ENCODE measurements at regions of chr16 and their contacts with region 1.

Region 1: DNA sequence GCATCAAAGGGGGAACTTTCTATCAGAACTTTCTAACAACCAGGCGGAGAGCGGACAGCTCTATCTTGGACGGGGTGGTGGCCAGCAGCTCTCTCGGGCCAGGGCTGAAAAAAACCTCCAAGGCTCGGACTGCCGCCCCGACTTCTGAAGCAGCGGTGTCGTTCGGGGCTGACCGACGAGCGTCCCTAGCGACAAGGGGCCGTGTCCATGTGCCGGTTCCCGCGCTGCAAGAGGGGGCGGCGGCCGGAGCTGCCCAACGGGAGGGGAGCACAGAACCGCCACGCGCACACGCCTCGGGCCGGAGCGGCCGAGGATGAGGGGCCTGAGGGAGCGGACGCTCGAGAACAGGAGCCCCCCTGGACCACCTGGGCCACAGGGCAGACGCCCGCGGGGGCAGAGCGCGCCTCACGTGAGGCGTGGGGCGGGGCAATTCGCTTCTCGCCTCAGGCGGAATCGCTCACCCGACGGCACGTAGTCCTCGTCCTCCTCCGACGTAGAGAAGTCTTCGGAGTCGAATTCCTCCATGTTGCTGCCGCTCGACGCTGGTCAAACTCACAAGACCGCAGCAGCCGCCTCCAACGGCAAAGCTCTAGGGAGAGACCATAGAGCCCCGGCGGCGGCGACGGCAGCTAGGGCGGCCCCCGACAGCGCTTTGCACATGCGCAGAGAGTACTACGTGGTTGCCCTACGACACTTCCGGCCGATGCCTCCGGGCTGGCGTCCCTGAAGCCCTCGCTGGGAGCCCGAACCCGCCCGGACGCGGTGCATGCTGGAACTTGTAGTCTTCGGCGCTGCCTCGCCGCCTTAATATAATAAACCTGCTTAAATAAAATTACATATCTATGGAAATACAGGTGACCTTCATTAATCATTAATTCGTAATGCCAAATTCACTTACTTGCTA is at the start of gene CFDP1:
- DNase-seq: peak; percentile 93
- ATAC-seq: peak; percentile 93
- H3K4me3 Mint-ChIP-seq: peak within 1 kb of the TSS; percentile 90
- H3K27ac Mint-ChIP-seq: peak within 1 kb of the TSS; percentile 91
- H3K4me1 Mint-ChIP-seq: peaks cover 24% of the 10 kb centered on the region
- H3K27me3 Mint-ChIP-seq: peaks cover 3% of the 10 kb centered on the region
- total RNA-seq, gene CFDP1: 47.8 to 49.4 TPM

Region 2: GRCh38 chr16:75464130-75464918 is 31.2 kb after region 1 on chr16 and contains the start of gene TMEM170A:
- POLR2A ChIA-PET with region 1: interaction called, 19 read pairs
- DNase-seq: peak; percentile 99
- ATAC-seq: peak; percentile 96
- H3K4me3 Mint-ChIP-seq: peak within 1 kb of the TSS; percentile 92
- H3K27ac Mint-ChIP-seq: peak within 1 kb of the TSS; percentile 91
- H3K4me1 Mint-ChIP-seq: peaks cover 22% of the 10 kb centered on the region
- H3K27me3 Mint-ChIP-seq: no peaks in the 10 kb centered on the region
- total RNA-seq, gene TMEM170A: 37.3 to 38.9 TPM

Region 3: GRCh38 chr16:75506567-75506966 is 73.5 kb after region 1 on chr16:
- POLR2A ChIA-PET with region 1: no interaction called
- DNase-seq: no peak
- ATAC-seq: no peak
- H3K4me3 Mint-ChIP-seq: no peak overlapping the region
- H3K27ac Mint-ChIP-seq: no peak overlapping the region
- H3K4me1 Mint-ChIP-seq: no peaks in the 10 kb centered on the region
- H3K27me3 Mint-ChIP-seq: peaks cover 9% of the 10 kb centered on the region

Region 4: DNA sequence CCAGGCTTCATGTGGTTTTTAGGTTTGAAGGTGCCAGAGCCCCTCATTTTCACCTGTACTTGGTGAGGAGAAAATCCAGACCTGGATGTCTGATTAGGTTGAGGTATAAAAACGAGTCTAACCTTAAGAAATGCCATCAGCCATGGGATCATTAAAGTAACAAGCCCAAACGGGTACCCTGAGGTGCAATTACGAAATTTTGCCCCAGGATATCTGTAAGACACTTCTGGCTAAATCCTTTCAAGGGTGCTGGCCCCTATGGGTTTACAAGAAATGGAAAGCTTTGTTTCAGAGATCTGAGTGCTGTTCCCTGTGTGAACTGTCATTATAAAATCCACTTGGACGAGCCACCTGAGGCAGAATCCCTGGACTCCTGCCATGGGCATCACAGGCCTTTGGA is 170.2 kb after region 1 on chr16:
- POLR2A ChIA-PET with region 1: no interaction called
- DNase-seq: no peak
- ATAC-seq: no peak
- H3K4me3 Mint-ChIP-seq: no peak overlapping the region
- H3K27ac Mint-ChIP-seq: no peak overlapping the region
- H3K4me1 Mint-ChIP-seq: no peaks in the 10 kb centered on the region
- H3K27me3 Mint-ChIP-seq: no peaks in the 10 kb centered on the region